ENCODE measurements at regions of chr5 and their contacts with region 1.

Region 1: DNA sequence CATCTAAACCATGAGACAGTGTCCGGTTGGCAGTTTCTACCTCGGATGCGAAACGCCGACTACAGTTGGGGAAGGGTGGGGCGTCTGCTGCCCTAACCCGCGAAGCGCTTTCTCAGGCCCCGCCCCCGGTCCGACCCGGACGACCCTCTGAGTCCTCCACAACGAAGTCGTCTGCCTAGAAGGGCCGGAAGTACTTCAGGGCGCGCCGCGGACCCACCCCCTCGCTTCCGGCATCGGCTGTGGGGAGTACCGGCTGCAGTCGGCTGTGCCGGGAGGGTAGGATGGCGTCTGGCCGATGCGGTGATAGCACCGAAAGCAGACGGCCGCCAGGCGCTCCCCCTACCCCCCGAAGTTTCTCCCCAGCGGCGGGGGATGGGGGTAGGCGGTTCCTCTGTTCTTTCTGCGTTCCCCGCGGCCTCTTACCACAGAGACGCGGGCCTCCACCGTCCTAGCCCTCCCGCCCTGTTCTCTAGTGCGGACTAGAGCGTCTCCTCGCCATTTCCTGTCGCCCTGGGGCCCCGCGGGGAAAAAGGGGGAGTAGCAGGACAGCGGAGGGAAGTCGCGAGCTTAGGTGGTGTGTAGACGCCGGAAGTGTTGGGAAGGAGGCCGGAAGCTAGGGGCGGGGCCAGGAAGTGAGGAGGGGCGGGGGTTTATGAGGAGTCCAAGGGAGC is at the start of gene TRIM41:
- DNase-seq: peak; percentile 89 to 98 (median 97)
- ATAC-seq: peak; percentile 81
- H3K4me3 ChIP-seq: peak within 1 kb of the TSS; percentile 90
- H3K4me3 Mint-ChIP-seq: peak within 1 kb of the TSS; percentile 89 to 100 (median 98)
- H3K27ac ChIP-seq: peak within 1 kb of the TSS; percentile 95
- H3K27ac Mint-ChIP-seq: peak within 1 kb of the TSS; percentile 98 to 100 (median 100)
- H3K4me1 ChIP-seq: peaks cover 20 to 22% of the 10 kb centered on the region in 2 donors
- H3K4me1 Mint-ChIP-seq: peaks cover 10 to 74% (median 53%) of the 10 kb centered on the region in 7 donors
- H3K27me3 ChIP-seq: no peaks in the 10 kb centered on the region
- H3K27me3 Mint-ChIP-seq: peaks cover 0 to 10% (median 0%) of the 10 kb centered on the region in 5 donors
- total RNA-seq, gene TRIM41: 27.3 to 36.5 (median 32.6) TPM

Region 2: GRCh38 chr5:180802325-180803180 is 420.6 kb before region 1 on chr5 and contains the start of gene MGAT1:
- CTCF ChIA-PET with region 1: no interaction called
- POLR2A ChIA-PET with region 1: interaction called, 7 read pairs
- intact Hi-C with region 1: loop called (anchors 1 to 2 kb)
- DNase-seq: peak; percentile 47 to 91 (median 59)
- ATAC-seq: peak; percentile 80
- H3K4me3 ChIP-seq: peak within 1 kb of the TSS; percentile 77
- H3K4me3 Mint-ChIP-seq: peak within 1 kb of the TSS; percentile 89 to 99 (median 96)
- H3K27ac ChIP-seq: peak within 1 kb of the TSS; percentile 96
- H3K27ac Mint-ChIP-seq: peak within 1 kb of the TSS; percentile 91 to 100 (median 98)
- H3K4me1 ChIP-seq: peaks cover 75 to 84% of the 10 kb centered on the region in 2 donors
- H3K4me1 Mint-ChIP-seq: peaks cover 76 to 83% (median 79%) of the 10 kb centered on the region in 7 donors
- H3K27me3 ChIP-seq: no peaks in the 10 kb centered on the region
- H3K27me3 Mint-ChIP-seq: no peaks in the 10 kb centered on the region
- total RNA-seq, gene MGAT1: 101 to 206 (median 196) TPM

Region 3: DNA sequence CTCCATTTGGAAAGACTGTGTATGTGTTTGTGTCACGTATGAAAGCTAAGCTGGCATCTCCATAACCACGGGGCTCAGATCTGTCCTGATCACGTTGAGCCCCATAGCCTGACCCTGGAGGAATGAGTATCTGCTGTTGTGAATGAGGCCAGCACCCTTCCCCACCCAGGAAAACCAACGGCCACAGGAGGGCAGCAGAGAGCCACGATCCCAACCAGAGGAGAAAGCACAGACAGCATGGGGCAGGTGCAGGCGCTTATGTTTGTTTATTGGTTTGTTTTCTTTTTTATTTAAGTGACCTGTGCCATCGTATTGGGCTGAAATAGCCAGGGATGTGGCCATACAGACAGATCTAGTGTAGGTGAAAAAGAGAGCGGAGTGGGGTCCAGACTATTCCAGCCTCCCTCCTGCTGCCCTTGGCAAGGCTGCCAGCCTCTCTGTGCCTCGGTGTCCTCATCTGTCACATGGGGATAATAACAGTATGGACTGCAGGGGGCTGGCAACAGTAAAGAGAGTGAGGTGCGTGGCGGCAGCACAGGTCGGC is 63.8 kb before region 1 on chr5:
- CTCF ChIA-PET with region 1: no interaction called
- POLR2A ChIA-PET with region 1: no interaction called
- intact Hi-C with region 1: loop called (anchors 1 kb)
- DNase-seq: peak; percentile 79 to 95 (median 87)
- ATAC-seq: peak; percentile 80
- H3K4me3 ChIP-seq: no peak overlapping the region
- H3K4me3 Mint-ChIP-seq: peak overlapping the region; percentile 57 to 83 (median 72)
- H3K27ac ChIP-seq: peak overlapping the region; percentile 89
- H3K27ac Mint-ChIP-seq: peak overlapping the region; percentile 73 to 97 (median 94)
- H3K4me1 ChIP-seq: peaks cover 15 to 19% of the 10 kb centered on the region in 2 donors
- H3K4me1 Mint-ChIP-seq: peaks cover 13 to 33% (median 27%) of the 10 kb centered on the region in 7 donors
- H3K27me3 ChIP-seq: no peaks in the 10 kb centered on the region
- H3K27me3 Mint-ChIP-seq: peaks cover 0 to 29% (median 17%) of the 10 kb centered on the region in 5 donors

Region 4: DNA sequence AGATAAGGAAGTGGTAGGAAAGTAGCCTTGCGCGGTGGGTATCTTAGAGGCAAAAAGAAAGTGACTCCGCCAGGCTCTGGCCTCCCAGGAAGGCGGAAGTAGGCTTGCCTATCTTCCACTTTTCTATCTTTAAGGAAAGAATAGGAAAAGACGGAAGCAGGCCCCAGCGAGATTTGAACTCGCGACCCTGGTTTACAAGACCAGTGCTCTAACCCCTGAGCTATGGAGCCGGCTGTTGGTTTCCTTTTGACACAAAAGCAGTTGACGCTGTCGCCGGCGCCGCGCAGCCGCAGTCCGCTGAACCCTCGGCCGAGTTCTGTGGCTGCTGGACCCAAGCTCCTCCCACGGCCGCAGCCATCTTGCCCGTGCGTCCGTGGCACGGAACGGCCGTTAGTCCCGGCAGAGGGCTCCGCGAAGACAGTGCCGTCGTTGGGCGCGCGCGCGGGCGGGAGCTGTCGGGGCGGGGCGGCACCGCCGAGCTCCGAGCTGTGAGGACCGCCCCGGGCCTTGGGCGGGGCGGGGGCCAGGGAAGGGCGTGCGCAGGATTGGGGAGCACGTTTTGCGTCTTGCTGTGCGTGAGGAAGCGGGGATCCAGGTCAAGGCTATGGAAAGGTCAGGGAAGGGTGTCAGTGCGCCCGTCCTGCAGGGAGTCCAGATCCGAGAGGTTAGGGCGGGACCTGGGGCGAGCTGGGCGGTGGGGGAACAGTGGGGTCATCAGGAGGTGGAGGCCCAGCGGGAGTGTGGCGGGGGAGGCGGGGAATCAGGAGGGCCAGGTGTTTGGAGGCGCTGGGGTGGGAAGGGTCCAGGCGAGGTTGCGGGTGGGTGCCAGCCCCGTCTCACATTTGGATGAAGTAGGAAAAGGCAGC is 31.4 kb before region 1 on chr5:
- CTCF ChIA-PET with region 1: interaction called, 23 read pairs
- POLR2A ChIA-PET with region 1: interaction called, 158 read pairs
- intact Hi-C with region 1: loop called (anchors 1 kb)
- DNase-seq: peak; percentile 91 to 99 (median 97)
- ATAC-seq: peak; percentile 81
- H3K4me3 ChIP-seq: peak overlapping the region; percentile 99
- H3K4me3 Mint-ChIP-seq: peak overlapping the region; percentile 94 to 99 (median 97)
- H3K27ac ChIP-seq: peak overlapping the region; percentile 86
- H3K27ac Mint-ChIP-seq: peak overlapping the region; percentile 95 to 100 (median 99)
- H3K4me1 ChIP-seq: peaks cover 0 to 5% of the 10 kb centered on the region in 2 donors
- H3K4me1 Mint-ChIP-seq: peaks cover 16 to 47% (median 26%) of the 10 kb centered on the region in 7 donors
- H3K27me3 ChIP-seq: no peaks in the 10 kb centered on the region
- H3K27me3 Mint-ChIP-seq: peaks cover 0 to 24% (median 0%) of the 10 kb centered on the region in 5 donors

Region 5: DNA sequence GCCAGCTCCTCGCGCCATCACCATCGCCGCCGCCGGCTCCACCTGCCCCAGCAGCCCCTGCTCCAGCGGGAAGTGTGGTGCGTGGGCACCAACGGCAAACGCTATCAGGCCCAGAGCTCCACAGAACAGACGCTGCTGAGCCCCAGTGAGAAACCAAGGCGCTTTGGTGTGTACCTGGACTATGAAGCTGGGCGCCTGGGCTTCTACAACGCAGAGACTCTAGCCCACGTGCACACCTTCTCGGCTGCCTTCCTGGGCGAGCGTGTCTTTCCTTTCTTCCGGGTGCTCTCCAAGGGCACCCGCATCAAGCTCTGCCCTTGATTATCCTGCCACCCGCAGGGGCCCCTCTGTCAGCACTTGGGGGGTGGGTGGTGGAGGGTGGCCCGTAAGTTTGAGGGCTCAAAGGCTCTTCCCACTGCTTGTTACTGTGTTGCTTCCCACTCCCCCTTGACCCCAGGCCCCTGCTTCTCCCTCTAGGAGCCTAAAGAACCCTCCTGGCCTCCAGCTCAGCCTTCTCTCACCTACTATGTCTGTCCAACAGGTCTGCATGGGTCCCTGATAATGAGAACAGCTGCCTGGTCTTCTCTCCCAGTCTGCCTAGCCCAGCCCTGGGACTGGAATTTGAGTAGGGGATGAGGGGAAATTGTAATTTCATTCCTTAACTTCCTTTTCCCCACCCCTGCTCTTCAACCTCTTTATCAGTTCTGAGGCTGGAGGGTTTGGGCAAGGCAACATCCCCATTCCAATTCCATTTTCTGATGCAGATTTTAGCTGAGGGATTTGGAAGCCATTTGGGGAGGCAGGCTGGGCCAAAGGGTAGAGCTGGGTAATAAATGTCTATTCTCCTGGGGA is 11.5 kb after region 1 on chr5:
- CTCF ChIA-PET with region 1: no interaction called
- POLR2A ChIA-PET with region 1: interaction called, 241 read pairs
- intact Hi-C with region 1: no loop called
- DNase-seq: no peak
- ATAC-seq: no peak
- H3K4me3 ChIP-seq: no peak overlapping the region
- H3K4me3 Mint-ChIP-seq: no peak overlapping the region
- H3K27ac ChIP-seq: no peak overlapping the region
- H3K27ac Mint-ChIP-seq: peak overlapping the region in 6 of 9 donors; percentile 15 to 78 (median 23)
- H3K4me1 ChIP-seq: peaks cover 0 to 5% of the 10 kb centered on the region in 2 donors
- H3K4me1 Mint-ChIP-seq: peaks cover 15 to 44% (median 31%) of the 10 kb centered on the region in 7 donors
- H3K27me3 ChIP-seq: no peaks in the 10 kb centered on the region
- H3K27me3 Mint-ChIP-seq: no peaks in the 10 kb centered on the region

Region 6: GRCh38 chr5:181260387-181261319 is 37.5 kb after region 1 on chr5 and contains the start of gene TRIM52:
- CTCF ChIA-PET with region 1: interaction called, 4 read pairs
- POLR2A ChIA-PET with region 1: interaction called, 182 read pairs
- intact Hi-C with region 1: loop called (anchors 1 kb)
- DNase-seq: peak; percentile 79 to 91 (median 90)
- ATAC-seq: peak; percentile 93
- H3K4me3 ChIP-seq: peak within 1 kb of the TSS; percentile 93
- H3K4me3 Mint-ChIP-seq: peak within 1 kb of the TSS; percentile 94 to 100 (median 98)
- H3K27ac ChIP-seq: peak within 1 kb of the TSS; percentile 97
- H3K27ac Mint-ChIP-seq: peak within 1 kb of the TSS; percentile 95 to 99 (median 98)
- H3K4me1 ChIP-seq: peaks cover 31 to 39% of the 10 kb centered on the region in 2 donors
- H3K4me1 Mint-ChIP-seq: peaks cover 34 to 60% (median 56%) of the 10 kb centered on the region in 7 donors
- H3K27me3 ChIP-seq: no peaks in the 10 kb centered on the region
- H3K27me3 Mint-ChIP-seq: no peaks in the 10 kb centered on the region
- total RNA-seq, gene TRIM52: 31.4 to 71.6 (median 35.7) TPM